ENCODE measurements at regions of chr11 and their contacts with region 1.

Region 1: GRCh38 chr11:107457558-107458271 is at the start of gene CWF19L2:
- DNase-seq: peak; percentile 94
- H3K4me3 Mint-ChIP-seq: peak within 1 kb of the TSS; percentile 95
- H3K27ac Mint-ChIP-seq: peak within 1 kb of the TSS; percentile 90
- H3K4me1 Mint-ChIP-seq: peaks cover 26% of the 10 kb centered on the region
- H3K27me3 Mint-ChIP-seq: no peaks in the 10 kb centered on the region
- total RNA-seq, gene CWF19L2: 16.9 to 17.9 TPM

Region 2: GRCh38 chr11:106021967-106022794 is 1435.5 kb before region 1 on chr11 and contains the start of gene MSANTD4:
- CTCF ChIA-PET with region 1: no interaction called
- intact Hi-C with region 1: loop called (anchors 2 kb)
- DNase-seq: peak; percentile 99
- H3K4me3 Mint-ChIP-seq: peak within 1 kb of the TSS; percentile 93
- H3K27ac Mint-ChIP-seq: peak within 1 kb of the TSS; percentile 85
- H3K4me1 Mint-ChIP-seq: peaks cover 40% of the 10 kb centered on the region
- H3K27me3 Mint-ChIP-seq: peaks cover 3% of the 10 kb centered on the region
- total RNA-seq, gene MSANTD4: 11.5 to 12.0 TPM

Region 3: GRCh38 chr11:107430525-107430924 is 27.2 kb before region 1 on chr11:
- CTCF ChIA-PET with region 1: no interaction called
- intact Hi-C with region 1: loop called (anchors 2 kb)
- DNase-seq: no peak
- H3K4me3 Mint-ChIP-seq: no peak overlapping the region
- H3K27ac Mint-ChIP-seq: peak overlapping the region; percentile 4
- H3K4me1 Mint-ChIP-seq: peaks cover 11% of the 10 kb centered on the region
- H3K27me3 Mint-ChIP-seq: no peaks in the 10 kb centered on the region

Region 4: GRCh38 chr11:107549253-107549953 is 91.7 kb after region 1 on chr11:
- CTCF ChIA-PET with region 1: interaction called, 7 read pairs
- intact Hi-C with region 1: loop called (anchors 5 kb)
- DNase-seq: peak; percentile 55
- H3K4me3 Mint-ChIP-seq: no peak overlapping the region
- H3K27ac Mint-ChIP-seq: no peak overlapping the region
- H3K4me1 Mint-ChIP-seq: peaks cover 6% of the 10 kb centered on the region
- H3K27me3 Mint-ChIP-seq: no peaks in the 10 kb centered on the region

Region 5: DNA sequence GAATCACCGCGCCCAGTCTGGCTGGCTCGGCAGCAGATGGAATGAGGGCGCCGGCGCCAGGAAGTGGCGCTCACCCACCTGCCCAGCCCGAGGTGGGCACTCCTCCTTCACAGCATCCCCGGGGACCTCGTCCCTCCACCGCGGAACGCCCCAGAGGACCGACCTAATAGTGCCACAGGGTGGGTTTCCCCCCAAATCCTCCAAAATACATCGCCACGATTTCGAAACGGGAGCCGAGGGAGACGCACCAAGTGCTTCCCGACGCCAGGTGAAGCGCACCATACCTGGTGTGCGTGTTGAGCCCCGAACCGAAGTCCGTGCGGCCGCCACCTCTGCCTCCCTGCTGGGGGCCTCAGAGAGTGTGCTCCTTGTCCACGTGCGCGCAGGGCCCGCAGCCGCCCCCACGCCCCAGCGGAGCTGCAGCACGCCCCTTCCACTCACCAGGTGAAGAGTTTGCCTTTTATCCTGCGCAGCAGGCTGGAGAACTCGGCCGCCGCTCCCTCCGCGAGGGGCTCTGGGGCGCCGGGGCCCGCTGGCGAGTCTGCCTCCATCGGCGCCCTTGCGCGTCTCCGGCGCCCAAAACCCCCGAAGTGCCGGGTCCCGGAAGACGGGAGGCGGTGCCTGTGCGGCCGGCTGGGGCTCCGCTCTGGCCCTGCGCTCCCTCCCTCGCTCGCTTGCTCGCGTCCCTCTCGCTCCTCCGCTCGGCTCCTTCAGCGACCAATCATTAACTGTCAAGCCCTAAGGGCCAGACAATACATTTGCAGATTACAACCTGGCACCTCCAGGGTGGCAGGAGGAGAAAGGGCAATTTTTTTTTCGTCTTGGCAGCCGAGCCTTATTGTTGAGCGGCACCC is 400.7 kb after region 1 on chr11 and contains the start of gene SLC35F2:
- CTCF ChIA-PET with region 1: no interaction called
- intact Hi-C with region 1: loop called (anchors 1 kb)
- DNase-seq: peak; percentile 77
- H3K4me3 Mint-ChIP-seq: peak within 1 kb of the TSS; percentile 95
- H3K27ac Mint-ChIP-seq: peak within 1 kb of the TSS; percentile 91
- H3K4me1 Mint-ChIP-seq: peaks cover 21% of the 10 kb centered on the region
- H3K27me3 Mint-ChIP-seq: no peaks in the 10 kb centered on the region
- total RNA-seq, gene SLC35F2: 18.2 to 20.5 TPM

Region 6: DNA sequence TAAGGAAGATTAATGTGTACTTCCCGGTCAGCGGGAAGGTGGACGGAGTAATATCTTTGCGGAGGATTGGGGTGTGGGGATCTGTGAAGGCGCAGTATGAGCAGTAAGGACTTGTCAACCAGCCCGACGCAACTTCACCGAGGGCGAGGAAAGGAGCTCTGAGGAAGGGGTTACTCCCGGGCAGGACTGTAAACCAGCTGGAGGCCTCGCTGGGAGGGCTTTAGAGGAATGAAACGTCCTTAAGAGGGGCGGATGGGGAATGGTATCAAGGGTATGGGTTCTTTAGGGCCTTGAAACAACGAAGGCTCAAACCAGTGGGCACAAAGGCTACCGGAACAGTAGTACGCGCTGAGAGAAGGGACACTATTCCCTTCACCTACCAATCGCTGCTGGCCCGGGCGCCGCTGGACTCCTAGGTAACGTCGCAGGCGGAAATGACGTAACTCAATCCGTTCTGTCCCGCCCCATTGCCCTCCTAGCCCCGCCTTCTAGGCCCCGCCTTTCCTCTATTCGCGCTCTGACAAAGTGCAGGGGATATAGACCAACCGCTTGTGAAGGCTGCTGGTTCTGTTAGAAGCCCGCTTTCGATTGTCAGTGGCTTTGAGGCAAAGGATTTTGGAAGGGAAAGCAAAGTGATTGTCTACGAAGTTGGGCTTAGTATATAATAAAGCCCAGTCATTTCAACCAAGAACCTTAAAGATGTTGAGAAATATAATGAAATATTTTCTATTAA is 1009.5 kb after region 1 on chr11 and contains the start of gene C11orf65:
- CTCF ChIA-PET with region 1: no interaction called
- intact Hi-C with region 1: loop called (anchors 10 kb)
- DNase-seq: peak; percentile 98
- H3K4me3 Mint-ChIP-seq: peak within 1 kb of the TSS; percentile 94
- H3K27ac Mint-ChIP-seq: peak within 1 kb of the TSS; percentile 96
- H3K4me1 Mint-ChIP-seq: peaks cover 8% of the 10 kb centered on the region
- H3K27me3 Mint-ChIP-seq: no peaks in the 10 kb centered on the region
- total RNA-seq, gene C11orf65: 2.2 to 3.1 TPM